ENCODE measurements at regions of chr19 and their contacts with region 1.

Region 1: DNA sequence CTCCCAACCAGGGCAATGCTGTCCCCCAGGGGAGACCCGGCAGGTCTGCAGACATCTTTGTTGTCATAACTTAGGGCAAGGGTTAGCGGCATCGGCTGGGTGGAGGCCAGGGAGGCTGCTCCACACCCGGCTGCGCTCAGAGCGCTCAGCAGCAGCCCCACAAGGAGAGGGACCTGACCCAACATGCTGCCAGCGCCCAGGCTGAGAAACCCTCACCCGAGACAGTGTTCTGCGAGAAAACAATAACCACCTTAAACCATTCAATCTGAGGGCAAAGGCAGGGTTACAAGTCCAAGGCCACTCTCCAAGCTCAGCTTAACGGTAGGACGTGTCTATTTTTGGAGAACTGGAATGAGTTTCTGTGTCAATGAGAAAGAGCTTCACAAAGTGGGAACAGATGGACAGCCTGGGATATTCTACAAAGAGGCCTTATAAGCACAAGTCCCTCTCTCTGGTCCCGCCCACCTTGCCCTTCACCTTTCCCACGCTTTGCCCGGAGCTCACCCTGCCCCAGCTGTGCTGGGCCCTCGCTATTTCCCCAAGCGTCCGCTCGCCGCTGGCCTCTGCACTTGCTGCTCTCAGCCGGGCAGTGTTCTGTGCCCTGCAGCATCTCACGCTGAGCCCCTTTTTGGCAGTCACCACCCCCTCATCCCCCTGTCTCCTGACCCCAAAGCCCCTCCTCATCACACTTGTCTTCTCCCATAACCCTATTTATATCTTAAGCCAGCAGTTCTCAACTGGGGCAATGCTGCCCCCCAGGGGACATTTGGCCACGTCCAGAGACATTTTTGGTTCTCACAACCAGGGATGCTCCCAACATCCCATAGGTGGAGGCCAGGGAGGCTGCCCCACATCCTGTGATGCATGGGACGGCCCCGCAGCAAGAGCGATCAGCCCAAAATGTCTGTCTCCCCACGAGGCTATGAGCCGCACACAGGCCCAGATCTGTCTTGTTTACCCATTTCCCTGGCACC is 17.6 kb downstream of the PPP1R12C start:
- DNase-seq: peak; percentile 73
- ATAC-seq: peak; percentile 36
- H3K4me3 Mint-ChIP-seq: no peak overlapping the region
- H3K27ac Mint-ChIP-seq: 0 out of 2 replicates have a peak overlapping the region, but pooled peaks have one; percentile 87
- H3K4me1 Mint-ChIP-seq: peaks cover 10% of the 10 kb centered on the region
- H3K27me3 Mint-ChIP-seq: no peaks in the 10 kb centered on the region; the same call in 1 of the 2 replicates
- CTCF ChIP-seq: no peak

Region 2: DNA sequence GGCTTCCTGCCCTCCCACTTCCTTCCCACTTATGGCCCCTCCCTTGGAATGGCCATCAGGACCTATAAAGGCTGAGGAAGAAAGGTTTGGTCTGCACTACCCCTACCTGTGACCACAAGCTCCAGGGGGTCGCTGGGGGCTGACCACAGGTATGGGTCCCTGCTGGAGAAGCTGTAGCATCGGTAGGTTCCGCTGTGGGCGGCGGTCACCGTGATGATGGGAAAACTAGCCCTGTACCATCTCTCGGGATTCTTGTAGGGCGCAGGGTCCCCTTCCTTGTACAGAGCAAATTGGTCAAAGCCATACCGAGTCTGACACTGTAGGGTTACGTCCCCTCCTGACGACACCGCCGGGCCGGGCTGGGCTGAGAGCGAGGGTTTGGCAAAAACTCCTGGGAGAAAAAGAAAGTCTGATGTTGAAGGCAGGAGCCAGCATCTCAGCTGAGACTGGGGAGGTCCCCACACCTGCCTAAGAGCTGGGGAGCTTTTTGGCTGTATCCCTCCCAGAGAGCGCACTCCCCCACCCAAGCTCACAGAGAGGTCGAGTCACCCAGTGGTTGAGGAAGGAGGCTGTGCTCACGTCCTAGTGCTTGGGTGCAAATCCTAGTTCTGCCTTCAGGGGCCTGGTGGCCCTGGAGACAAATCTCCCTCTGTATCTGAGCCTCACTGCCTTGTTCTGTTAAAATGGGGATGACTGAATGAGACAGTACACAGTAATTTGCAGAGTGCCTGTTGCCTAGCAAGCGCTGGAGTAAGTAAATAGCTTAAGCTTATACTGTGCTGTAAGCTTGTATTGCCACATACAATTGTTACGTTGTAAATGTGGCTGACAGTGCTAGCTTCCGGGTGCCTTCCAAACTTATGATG is 72.1 kb before region 1 on chr19:
- CTCF ChIA-PET with region 1: no interaction called
- POLR2A ChIA-PET with region 1: no interaction called
- DNase-seq: no peak
- ATAC-seq: peak; percentile 41
- H3K4me3 Mint-ChIP-seq: no peak overlapping the region
- H3K27ac Mint-ChIP-seq: 0 out of 2 replicates have a peak overlapping the region, but pooled peaks have one; percentile 12
- H3K4me1 Mint-ChIP-seq: no peaks in the 10 kb centered on the region
- H3K27me3 Mint-ChIP-seq: no peaks in the 10 kb centered on the region
- CTCF ChIP-seq: no peak

Region 3: GRCh38 chr19:55117636-55118391 is 18.0 kb after region 1 on chr19 and contains the start of gene PPP1R12C:
- CTCF ChIA-PET with region 1: interaction called, 11 read pairs
- POLR2A ChIA-PET with region 1: interaction called, 7 read pairs
- DNase-seq: peak; percentile 98
- ATAC-seq: peak; percentile 78
- H3K4me3 Mint-ChIP-seq: peak within 1 kb of the TSS; percentile 98
- H3K27ac Mint-ChIP-seq: peak within 1 kb of the TSS; percentile 97
- H3K4me1 Mint-ChIP-seq: peaks cover 31% of the 10 kb centered on the region
- H3K27me3 Mint-ChIP-seq: peaks cover 21% of the 10 kb centered on the region
- CTCF ChIP-seq: no peak
- total RNA-seq, gene PPP1R12C: 88.4 to 99.3 TPM (median 92.3 TPM) in 3 replicates

Region 4: GRCh38 chr19:55132453-55133129 is 32.8 kb after region 1 on chr19:
- CTCF ChIA-PET with region 1: interaction called, 17 read pairs
- POLR2A ChIA-PET with region 1: interaction called, 6 read pairs
- DNase-seq: no peak
- ATAC-seq: peak; percentile 66
- H3K4me3 Mint-ChIP-seq: no peak overlapping the region
- H3K27ac Mint-ChIP-seq: 0 out of 2 replicates have a peak overlapping the region, but pooled peaks have one; percentile 22
- H3K4me1 Mint-ChIP-seq: peaks cover 23% of the 10 kb centered on the region
- H3K27me3 Mint-ChIP-seq: peaks cover 4% of the 10 kb centered on the region
- CTCF ChIP-seq: no peak

Measured in WTC11 (cell line).